Activated CD4-positive, alpha-beta T cell treated with anti-CD3 and anti-CD28 coated beads for 36 hours (primary cell): ENCODE measurements at regions of chr11 and their contacts with region 1.

Region 1: GRCh38 chr11:12893787-12894672 is 115.1 kb upstream of the RASSF10 start:
- DNase-seq: peak; percentile 79
- ATAC-seq: no peak
- H3K4me3 Mint-ChIP-seq: no peak overlapping the region
- H3K27ac Mint-ChIP-seq: no peak overlapping the region
- H3K4me1 Mint-ChIP-seq: no peaks in the 10 kb centered on the region
- H3K27me3 Mint-ChIP-seq: peaks cover 14% of the 10 kb centered on the region

Region 2: DNA sequence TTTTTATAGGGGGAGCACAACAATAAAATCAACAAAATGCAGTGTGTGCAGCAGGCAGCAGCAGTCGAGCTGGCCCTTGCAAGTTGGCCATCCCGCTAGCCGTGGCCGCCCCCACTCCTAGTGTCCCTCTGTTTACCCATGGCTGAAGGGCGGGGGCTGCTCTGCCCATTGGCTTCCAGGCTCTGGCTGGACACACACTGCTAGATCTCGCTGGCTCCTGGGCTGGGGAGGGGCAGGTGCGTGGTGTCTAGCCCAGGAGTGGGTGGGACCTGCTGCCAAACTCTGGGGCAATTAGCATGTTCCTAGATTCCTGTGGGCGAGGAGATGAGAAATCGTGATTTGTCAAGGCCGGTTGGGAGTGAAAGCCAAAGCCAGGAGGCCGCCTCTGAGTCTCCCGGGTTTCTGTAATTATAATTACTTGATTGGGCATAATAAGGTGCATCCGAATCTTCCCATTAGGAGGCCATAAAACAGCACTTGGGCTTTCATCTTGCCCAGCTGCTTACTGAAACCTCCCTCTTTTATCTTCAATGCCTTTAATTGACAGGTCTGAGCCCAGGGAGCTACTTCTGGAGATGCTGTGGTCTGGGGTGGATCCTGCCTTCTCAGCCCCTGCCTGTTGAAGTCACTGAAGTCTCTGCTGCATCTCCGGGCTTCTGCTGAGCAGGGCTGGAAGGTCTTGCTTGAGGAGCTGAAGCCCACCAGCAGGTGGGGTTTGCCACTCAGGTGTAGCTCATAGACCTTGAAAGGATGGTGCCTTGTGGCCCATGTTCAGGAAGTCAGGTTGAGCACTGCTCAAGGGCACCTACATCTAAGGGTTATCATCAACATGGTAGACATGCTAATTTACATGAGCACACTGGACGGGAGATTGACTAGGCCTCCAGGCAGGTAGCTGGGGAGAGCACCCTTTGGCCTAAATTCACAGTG is 841.1 kb before region 1 on chr11:
- CTCF ChIA-PET with region 1: no interaction called
- POLR2A ChIA-PET with region 1: no interaction called
- intact Hi-C with region 1: loop called in 1 of 2 experiments (anchors 5 kb)
- DNase-seq: peak; percentile 54
- ATAC-seq: peak; percentile 60
- H3K4me3 Mint-ChIP-seq: no peak overlapping the region
- H3K27ac Mint-ChIP-seq: no peak overlapping the region
- H3K4me1 Mint-ChIP-seq: peaks cover 4% of the 10 kb centered on the region
- H3K27me3 Mint-ChIP-seq: no peaks in the 10 kb centered on the region

Region 3: GRCh38 chr11:12411806-12412727 is 482.0 kb before region 1 on chr11:
- CTCF ChIA-PET with region 1: interaction called, 3 read pairs
- POLR2A ChIA-PET with region 1: no interaction called
- intact Hi-C with region 1: loop called (anchors 1 to 5 kb)
- DNase-seq: peak; percentile 65
- ATAC-seq: peak; percentile 65
- H3K4me3 Mint-ChIP-seq: no peak overlapping the region
- H3K27ac Mint-ChIP-seq: no peak overlapping the region
- H3K4me1 Mint-ChIP-seq: no peaks in the 10 kb centered on the region
- H3K27me3 Mint-ChIP-seq: peaks cover 13% of the 10 kb centered on the region

Region 4: GRCh38 chr11:13073119-13073981 is 179.3 kb after region 1 on chr11:
- CTCF ChIA-PET with region 1: no interaction called
- POLR2A ChIA-PET with region 1: no interaction called
- intact Hi-C with region 1: no loop called
- DNase-seq: peak; percentile 5
- ATAC-seq: no peak
- H3K4me3 Mint-ChIP-seq: no peak overlapping the region
- H3K27ac Mint-ChIP-seq: no peak overlapping the region
- H3K4me1 Mint-ChIP-seq: no peaks in the 10 kb centered on the region
- H3K27me3 Mint-ChIP-seq: peaks cover 13% of the 10 kb centered on the region

Region 5: GRCh38 chr11:13303668-13304649 is 409.9 kb after region 1 on chr11:
- CTCF ChIA-PET with region 1: no interaction called
- POLR2A ChIA-PET with region 1: no interaction called
- intact Hi-C with region 1: no loop called
- DNase-seq: no peak
- ATAC-seq: peak; percentile 58
- H3K4me3 Mint-ChIP-seq: no peak overlapping the region
- H3K27ac Mint-ChIP-seq: peak overlapping the region; percentile 49
- H3K4me1 Mint-ChIP-seq: peaks cover 25% of the 10 kb centered on the region
- H3K27me3 Mint-ChIP-seq: no peaks in the 10 kb centered on the region